Naive thymus-derived CD4-positive, alpha-beta T cell (primary cell): ENCODE measurements at regions of chr19 and their contacts with region 1.

Region 1: DNA sequence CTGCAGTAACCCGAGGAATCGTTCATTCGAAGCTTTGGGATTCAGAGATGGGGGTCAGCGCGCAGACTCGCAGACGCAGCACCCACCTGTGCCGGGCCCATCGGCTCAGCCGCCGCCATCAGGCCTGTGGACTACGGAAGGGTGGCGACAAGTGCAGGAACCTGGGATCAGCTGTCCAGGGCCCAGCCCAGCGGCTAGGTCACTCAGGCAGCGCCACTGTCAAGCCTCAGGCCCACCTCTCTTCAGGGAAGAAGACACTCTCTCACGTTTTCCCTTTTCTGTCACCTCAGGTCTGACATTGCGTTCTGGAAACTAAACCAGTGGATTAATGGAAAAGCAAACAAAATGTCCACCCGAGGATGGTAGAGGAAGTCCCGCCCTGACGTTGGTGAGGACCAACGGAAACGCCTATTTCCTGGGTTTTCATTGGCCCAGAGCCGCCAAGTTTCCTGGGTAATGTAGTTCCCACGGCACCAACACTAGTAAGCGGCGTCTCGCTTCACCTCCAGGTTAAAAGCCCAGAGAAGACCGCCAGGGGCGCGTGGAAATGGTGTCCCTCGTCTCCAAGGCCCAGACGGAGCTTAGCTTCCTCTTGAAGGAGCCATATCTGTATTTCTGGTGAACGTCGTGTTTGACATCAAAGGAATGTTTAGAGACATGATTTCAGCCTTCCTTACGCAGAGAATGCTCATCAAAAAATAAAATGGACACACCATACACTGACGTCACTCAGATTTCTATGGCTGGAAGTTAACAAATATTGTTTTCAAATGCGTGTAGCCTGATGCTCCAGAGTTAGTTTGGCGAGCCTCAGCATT is at the start of gene ZNF772:
- DNase-seq: peak; percentile 55 to 96 (median 88)
- ATAC-seq: peak; percentile 99
- H3K4me3 ChIP-seq: peak within 1 kb of the TSS; percentile 80
- H3K4me3 Mint-ChIP-seq: peak within 1 kb of the TSS; percentile 87 to 95 (median 92)
- H3K27ac ChIP-seq: peak within 1 kb of the TSS; percentile 77
- H3K27ac Mint-ChIP-seq: peak within 1 kb of the TSS; percentile 84 to 96 (median 89)
- H3K4me1 ChIP-seq: peaks cover 5 to 12% of the 10 kb centered on the region in 2 donors
- H3K4me1 Mint-ChIP-seq: peaks cover 10 to 26% (median 19%) of the 10 kb centered on the region in 7 donors
- H3K27me3 ChIP-seq: no peaks in the 10 kb centered on the region
- H3K27me3 Mint-ChIP-seq: peaks cover 0 to 7% (median 0%) of the 10 kb centered on the region in 5 donors
- total RNA-seq, gene ZNF772: 1.5 to 20.5 (median 4.3) TPM

Region 2: DNA sequence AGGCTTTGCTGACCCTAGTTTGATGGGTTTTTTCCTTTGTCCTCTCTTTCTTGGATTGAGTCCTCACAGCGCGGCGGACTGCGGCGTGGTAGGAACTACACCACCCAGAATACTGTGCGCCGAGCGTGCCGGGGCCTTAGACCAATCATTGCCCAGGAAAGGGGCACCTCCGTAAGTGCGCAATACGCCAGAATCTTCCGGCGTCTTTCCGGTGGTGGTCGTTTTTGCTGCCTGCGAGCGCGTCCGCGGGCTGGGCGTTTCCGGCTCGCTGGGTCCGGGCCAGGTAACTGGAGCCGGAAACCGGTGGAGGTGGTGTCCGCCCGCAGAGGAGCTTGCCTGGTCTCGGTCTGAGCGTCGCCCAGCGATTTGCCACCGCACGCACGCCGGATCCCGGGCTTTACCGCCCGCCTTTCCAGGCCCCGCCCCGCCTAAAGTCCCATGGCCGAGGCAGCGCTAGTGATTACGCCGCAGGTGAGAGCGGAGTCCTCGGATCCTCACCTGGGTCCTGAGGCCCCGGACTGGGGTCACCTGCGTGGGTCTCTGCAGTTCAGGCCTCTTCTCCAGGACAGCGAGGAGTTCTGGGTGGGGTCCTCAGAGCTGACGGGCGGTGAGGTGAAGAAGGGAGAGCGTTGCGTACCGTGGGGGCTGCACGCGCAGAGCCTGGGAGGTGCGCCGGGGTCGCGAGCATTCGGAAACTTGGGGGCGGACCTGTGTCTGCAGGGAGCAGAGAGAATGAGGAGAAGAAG is 49.9 kb after region 1 on chr19 and contains the start of gene ZNF549:
- CTCF ChIA-PET with region 1: no interaction called
- POLR2A ChIA-PET with region 1: interaction called, 3 read pairs
- intact Hi-C with region 1: loop called in 1 of 2 experiments (anchors 1 kb)
- DNase-seq: peak; percentile 65 to 90 (median 88)
- ATAC-seq: peak; percentile 99
- H3K4me3 ChIP-seq: peak within 1 kb of the TSS; percentile 98
- H3K4me3 Mint-ChIP-seq: peak within 1 kb of the TSS; percentile 89 to 98 (median 96)
- H3K27ac ChIP-seq: peak within 1 kb of the TSS; percentile 94
- H3K27ac Mint-ChIP-seq: peak within 1 kb of the TSS; percentile 80 to 98 (median 95)
- H3K4me1 ChIP-seq: peaks cover 14 to 18% of the 10 kb centered on the region in 2 donors
- H3K4me1 Mint-ChIP-seq: peaks cover 15 to 36% (median 32%) of the 10 kb centered on the region in 7 donors
- H3K27me3 ChIP-seq: no peaks in the 10 kb centered on the region
- H3K27me3 Mint-ChIP-seq: peaks cover 0 to 4% (median 0%) of the 10 kb centered on the region in 5 donors
- total RNA-seq, gene ZNF549: 6.9 to 24.8 (median 11.3) TPM

Region 3: GRCh38 chr19:57546513-57546912 is 69.1 kb after region 1 on chr19:
- CTCF ChIA-PET with region 1: no interaction called
- POLR2A ChIA-PET with region 1: no interaction called
- intact Hi-C with region 1: no loop called
- DNase-seq: no peak
- ATAC-seq: no peak
- H3K4me3 ChIP-seq: peak overlapping the region; percentile 15
- H3K4me3 Mint-ChIP-seq: no peak overlapping the region
- H3K27ac ChIP-seq: no peak overlapping the region
- H3K27ac Mint-ChIP-seq: no peak overlapping the region
- H3K4me1 ChIP-seq: no peaks in the 10 kb centered on the region
- H3K4me1 Mint-ChIP-seq: peaks cover 0 to 3% (median 0%) of the 10 kb centered on the region in 7 donors
- H3K27me3 ChIP-seq: no peaks in the 10 kb centered on the region
- H3K27me3 Mint-ChIP-seq: no peaks in the 10 kb centered on the region

Region 4: GRCh38 chr19:57559404-57560025 is 82.1 kb after region 1 on chr19 and contains the start of gene ZNF550:
- CTCF ChIA-PET with region 1: no interaction called
- POLR2A ChIA-PET with region 1: no interaction called
- intact Hi-C with region 1: loop called in 1 of 2 experiments (anchors 2 kb)
- DNase-seq: peak; percentile 71 to 85 (median 84)
- ATAC-seq: peak; percentile 99
- H3K4me3 ChIP-seq: peak within 1 kb of the TSS; percentile 89
- H3K4me3 Mint-ChIP-seq: peak within 1 kb of the TSS; percentile 87 to 99 (median 98)
- H3K27ac ChIP-seq: peak within 1 kb of the TSS; percentile 82
- H3K27ac Mint-ChIP-seq: peak within 1 kb of the TSS; percentile 81 to 96 (median 91)
- H3K4me1 ChIP-seq: peaks cover 16 to 19% of the 10 kb centered on the region in 2 donors
- H3K4me1 Mint-ChIP-seq: peaks cover 21 to 45% (median 33%) of the 10 kb centered on the region in 7 donors
- H3K27me3 ChIP-seq: no peaks in the 10 kb centered on the region
- H3K27me3 Mint-ChIP-seq: peaks cover 0 to 16% (median 4%) of the 10 kb centered on the region in 5 donors
- total RNA-seq, gene ZNF550: 12.9 to 56.2 (median 23.5) TPM

Region 5: GRCh38 chr19:57819475-57820148 is 342.2 kb after region 1 on chr19:
- CTCF ChIA-PET with region 1: no interaction called
- POLR2A ChIA-PET with region 1: no interaction called
- intact Hi-C with region 1: loop called in 1 of 2 experiments (anchors 2 kb)
- DNase-seq: peak; percentile 45 to 85 (median 79)
- ATAC-seq: peak; percentile 89
- H3K4me3 ChIP-seq: peak overlapping the region; percentile 98
- H3K4me3 Mint-ChIP-seq: peak overlapping the region; percentile 95 to 99 (median 98)
- H3K27ac ChIP-seq: peak overlapping the region; percentile 92
- H3K27ac Mint-ChIP-seq: peak overlapping the region; percentile 88 to 99 (median 95)
- H3K4me1 ChIP-seq: peaks cover 0 to 13% of the 10 kb centered on the region in 2 donors
- H3K4me1 Mint-ChIP-seq: peaks cover 38 to 73% (median 67%) of the 10 kb centered on the region in 7 donors
- H3K27me3 ChIP-seq: no peaks in the 10 kb centered on the region
- H3K27me3 Mint-ChIP-seq: no peaks in the 10 kb centered on the region

Region 6: DNA sequence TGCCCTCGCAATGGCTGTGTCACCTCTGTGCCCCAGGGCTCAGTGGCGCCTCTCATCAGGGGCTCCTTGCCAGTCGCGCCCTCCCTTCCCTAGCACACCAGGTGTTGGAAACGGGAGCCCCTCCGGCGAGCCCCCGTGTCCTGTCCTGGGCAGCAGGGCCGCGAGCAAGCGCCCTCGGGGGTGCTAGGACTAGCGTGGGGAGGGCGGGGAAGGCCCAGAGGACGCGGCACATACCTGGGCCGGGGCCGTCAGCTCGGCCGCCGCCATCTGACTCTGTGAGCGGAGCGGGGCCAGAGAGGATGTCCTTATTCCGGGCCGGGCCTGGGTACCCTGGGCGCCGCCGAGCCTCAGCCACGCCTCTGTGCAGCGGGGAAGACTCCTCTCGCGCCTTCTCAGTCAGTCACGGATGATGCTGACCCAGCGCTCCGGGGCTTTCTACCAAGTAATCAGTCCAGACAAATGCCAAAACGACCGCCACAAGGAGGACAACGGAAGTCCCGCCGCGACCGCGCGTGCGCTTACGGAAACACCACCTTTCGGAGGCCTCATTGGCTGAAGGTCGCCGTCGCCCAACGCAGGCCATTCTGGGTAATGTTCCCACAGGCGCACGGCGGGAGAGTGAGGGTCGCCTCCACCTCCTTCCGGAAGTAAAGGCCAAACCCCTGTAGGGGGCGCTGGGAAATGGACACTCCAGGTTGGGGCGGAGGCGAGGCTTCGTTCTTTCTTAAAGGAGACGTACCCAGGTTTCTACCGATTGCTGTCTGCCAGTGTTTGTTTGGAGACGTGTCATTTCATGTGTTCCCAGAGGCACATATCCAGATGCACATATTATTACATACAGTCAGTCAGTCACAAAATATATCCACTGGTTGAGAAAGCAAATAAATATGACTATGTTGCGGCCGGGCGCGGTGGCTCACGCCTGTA is 470.1 kb after region 1 on chr19 and contains the start of gene ZNF256:
- CTCF ChIA-PET with region 1: no interaction called
- POLR2A ChIA-PET with region 1: no interaction called
- intact Hi-C with region 1: loop called in 1 of 2 experiments (anchors 1 kb)
- DNase-seq: peak; percentile 55 to 85 (median 77)
- ATAC-seq: peak; percentile 97
- H3K4me3 ChIP-seq: peak within 1 kb of the TSS; percentile 71
- H3K4me3 Mint-ChIP-seq: peak within 1 kb of the TSS; percentile 89 to 97 (median 95)
- H3K27ac ChIP-seq: peak within 1 kb of the TSS; percentile 80
- H3K27ac Mint-ChIP-seq: peak within 1 kb of the TSS; percentile 83 to 97 (median 92)
- H3K4me1 ChIP-seq: peaks cover 6 to 9% of the 10 kb centered on the region in 2 donors
- H3K4me1 Mint-ChIP-seq: peaks cover 10 to 28% (median 21%) of the 10 kb centered on the region in 7 donors
- H3K27me3 ChIP-seq: no peaks in the 10 kb centered on the region
- H3K27me3 Mint-ChIP-seq: peaks cover 0 to 4% (median 0%) of the 10 kb centered on the region in 5 donors
- total RNA-seq, gene ZNF256: 5.2 to 13.8 (median 11.8) TPM

Region 7: GRCh38 chr19:58009666-58010371 is 532.4 kb after region 1 on chr19:
- CTCF ChIA-PET with region 1: no interaction called
- POLR2A ChIA-PET with region 1: no interaction called
- intact Hi-C with region 1: loop called in 1 of 2 experiments (anchors 5 kb)
- DNase-seq: peak in 7 of 9 donors; percentile 26 to 67 (median 45)
- ATAC-seq: peak; percentile 92
- H3K4me3 ChIP-seq: peak overlapping the region; percentile 46
- H3K4me3 Mint-ChIP-seq: peak overlapping the region in 7 of 10 donors; percentile 35 to 79 (median 57)
- H3K27ac ChIP-seq: peak overlapping the region; percentile 57
- H3K27ac Mint-ChIP-seq: peak overlapping the region in 5 of 9 donors; percentile 12 to 62 (median 25)
- H3K4me1 ChIP-seq: no peaks in the 10 kb centered on the region
- H3K4me1 Mint-ChIP-seq: peaks cover 0 to 4% (median under 1%) of the 10 kb centered on the region in 7 donors
- H3K27me3 ChIP-seq: no peaks in the 10 kb centered on the region
- H3K27me3 Mint-ChIP-seq: peaks cover 0 to 14% (median 4%) of the 10 kb centered on the region in 5 donors